ACHN (cell line): ENCODE measurements at regions of chr11 and their contacts with region 1.

Region 1: DNA sequence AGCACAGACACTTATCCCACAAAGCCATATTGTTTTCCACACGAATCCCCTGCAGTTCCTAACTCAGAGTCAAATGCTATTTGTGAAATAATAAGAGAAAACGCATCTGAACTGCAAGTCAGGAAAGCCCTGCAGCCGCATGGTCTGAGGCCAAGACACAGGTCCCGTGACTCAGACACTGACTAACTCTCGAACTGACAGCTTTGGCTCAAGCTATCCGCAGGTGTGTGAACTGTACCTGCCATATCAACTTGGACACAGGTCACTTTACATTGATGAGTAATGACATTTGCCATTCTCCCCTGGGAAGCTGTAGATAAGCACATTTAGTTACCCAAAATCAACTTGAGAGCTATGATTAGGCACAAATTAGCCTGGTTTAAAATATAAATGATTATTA is 34.9 kb upstream of the NFRKB start:
- DNase-seq: peak; percentile 23

Region 2: DNA sequence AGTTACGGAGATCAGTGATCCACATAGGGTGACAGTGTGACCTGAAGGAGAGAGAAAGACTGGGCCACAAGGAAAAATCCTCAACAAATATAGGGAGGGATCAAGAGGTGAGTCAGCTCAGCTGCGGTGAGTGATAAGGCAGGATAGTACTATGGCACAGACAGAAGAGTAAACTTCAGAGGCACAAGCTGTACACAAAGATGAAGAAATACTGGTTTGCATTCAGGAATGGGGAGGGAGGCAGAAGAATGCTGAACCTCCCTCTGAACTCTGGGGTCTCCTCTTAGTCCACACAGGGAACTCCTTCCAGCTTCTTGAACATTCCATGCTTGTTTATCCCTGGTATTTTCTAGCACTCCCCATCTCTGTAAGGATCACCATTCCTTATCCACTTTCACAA is 392.0 kb before region 1 on chr11:
- in situ Hi-C with region 1: no loop called
- DNase-seq: no peak

Region 3: GRCh38 chr11:130131961-130132850 is 201.9 kb after region 1 on chr11:
- in situ Hi-C with region 1: loop called (anchors 25 kb)
- DNase-seq: peak; percentile 64